Activated T-helper 1 cell treated with anti-CD3 and anti-CD28 coated beads, Interleukin-12 subunit alpha, Interleukin-12 subunit beta, Interleukin-2, Interleukin-4 antibody, amounts not matched to agents 30 ng/mL and 10 ng/mL and 1 ng/mL, durations not matched to agents 14 hours and 24 hours and 36 hours (primary cell): ENCODE measurements at regions of chr19 and their contacts with region 1.

Region 1: GRCh38 chr19:5967994-5968430 is 9.9 kb downstream of the RANBP3 start:
- DNase-seq: peak; percentile 52
- H3K4me3 Mint-ChIP-seq: no peak overlapping the region
- H3K27ac Mint-ChIP-seq: peak overlapping the region; percentile 54
- H3K4me1 Mint-ChIP-seq: peaks cover 81% of the 10 kb centered on the region
- H3K27me3 Mint-ChIP-seq: no peaks in the 10 kb centered on the region

Region 2: DNA sequence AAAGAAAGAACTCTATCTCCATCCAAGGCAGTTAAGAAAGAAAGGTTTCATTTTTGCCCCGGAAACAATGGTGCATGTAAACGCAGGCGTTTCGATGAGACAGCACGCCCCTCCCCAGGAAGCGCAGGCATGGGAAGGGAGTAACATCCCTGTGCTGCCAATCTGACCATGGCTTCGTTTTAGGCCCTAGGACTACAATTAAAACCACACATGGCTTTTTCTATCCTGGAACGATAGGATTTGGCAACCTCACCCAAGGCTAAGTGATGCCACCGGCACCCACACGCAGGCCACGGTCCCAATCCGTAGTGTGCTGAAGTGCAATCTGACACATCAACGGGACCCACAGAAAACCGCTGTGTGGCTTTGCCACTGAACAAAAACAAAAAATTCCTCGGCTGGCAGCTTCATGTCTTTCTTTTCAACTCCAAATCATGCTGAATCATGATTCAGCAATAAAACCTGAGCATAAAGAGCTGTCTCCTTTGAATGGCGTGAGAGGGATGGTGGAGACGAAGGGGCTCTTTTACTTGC is 14.3 kb before region 1 on chr19:
- intact Hi-C with region 1: loop called (anchors 2 kb)
- DNase-seq: peak; percentile 24
- H3K4me3 Mint-ChIP-seq: peak overlapping the region; percentile 76
- H3K27ac Mint-ChIP-seq: peak overlapping the region; percentile 98
- H3K4me1 Mint-ChIP-seq: peaks cover 75% of the 10 kb centered on the region
- H3K27me3 Mint-ChIP-seq: no peaks in the 10 kb centered on the region

Region 3: DNA sequence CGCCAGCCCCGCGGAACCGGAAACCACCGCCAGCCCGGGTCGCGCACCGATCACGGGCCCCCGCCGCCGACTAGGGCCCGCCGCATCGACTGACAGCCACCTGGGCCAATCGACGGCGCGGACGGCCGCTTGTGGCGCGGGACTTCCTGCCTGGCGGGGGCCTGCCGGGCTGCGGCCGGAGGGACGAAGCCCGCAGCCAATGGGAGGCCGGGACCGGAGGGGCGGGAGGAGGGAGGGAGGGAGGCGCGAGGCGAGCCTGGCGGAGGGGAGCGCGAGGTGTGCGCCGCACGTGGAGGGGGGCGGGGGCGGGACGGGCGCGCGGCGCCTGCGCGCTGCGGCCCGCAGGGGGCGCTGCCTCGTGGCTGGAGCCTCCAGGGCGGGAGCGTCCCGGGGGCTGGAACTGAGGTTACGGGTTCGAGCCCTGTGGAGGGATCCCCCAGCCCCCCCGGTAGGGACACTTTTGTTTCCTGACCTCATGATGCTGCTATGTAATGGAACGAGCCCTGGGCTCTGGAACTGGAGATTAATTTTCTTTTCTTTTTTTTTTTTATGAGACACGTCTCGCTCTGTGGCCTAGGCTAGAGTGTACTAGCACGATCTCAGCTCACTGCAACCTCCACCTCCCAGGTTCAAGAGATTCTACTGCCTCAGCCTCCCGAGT is 312.0 kb after region 1 on chr19 and contains the start of gene MLLT1:
- intact Hi-C with region 1: no loop called
- DNase-seq: peak; percentile 96
- H3K4me3 Mint-ChIP-seq: peak within 1 kb of the TSS; percentile 95
- H3K27ac Mint-ChIP-seq: peak within 1 kb of the TSS; percentile 90
- H3K4me1 Mint-ChIP-seq: peaks cover 26% of the 10 kb centered on the region
- H3K27me3 Mint-ChIP-seq: no peaks in the 10 kb centered on the region
- total RNA-seq, gene MLLT1: 71.6 and 77.4 TPM in 2 replicates